ENCODE measurements at regions of chr7 and their contacts with region 1.

Region 1: DNA sequence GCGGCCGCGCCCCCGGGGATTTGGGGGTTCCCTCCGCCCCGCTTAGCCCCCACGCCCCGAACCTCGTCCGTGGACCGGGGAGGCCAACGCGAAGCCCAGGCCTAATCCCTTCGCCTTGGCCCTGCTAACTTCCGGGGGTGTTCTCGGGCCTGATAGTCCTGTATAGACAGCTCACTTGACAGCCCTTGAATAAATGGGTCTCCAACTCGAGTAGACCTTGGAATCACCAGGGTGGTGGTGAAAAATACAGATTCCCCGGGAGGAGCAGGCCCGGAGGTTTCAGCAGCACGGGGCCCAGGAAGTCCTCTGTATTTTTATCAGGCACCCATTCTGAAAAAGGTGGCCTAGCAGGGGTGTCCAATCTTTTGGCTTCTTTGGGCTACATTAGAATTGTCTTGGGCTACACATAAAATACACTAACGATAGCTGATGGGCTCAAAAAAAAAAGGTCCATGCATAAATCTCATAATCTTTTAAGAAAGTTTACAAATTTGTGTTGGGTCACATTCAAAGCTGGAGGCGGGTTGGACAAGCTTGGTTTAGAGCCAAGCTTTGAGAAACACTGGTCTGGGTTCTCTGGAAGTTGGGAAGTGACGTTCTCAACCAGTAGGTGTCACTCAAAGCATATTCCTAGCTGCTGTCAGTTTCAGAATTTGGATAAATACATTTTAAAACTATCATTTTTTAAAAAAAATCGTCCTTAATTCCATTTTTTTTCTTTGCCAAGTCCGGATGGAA is 221.7 kb downstream of the PHTF2 start:
- DNase-seq: peak; percentile 86
- H3K4me3 ChIP-seq: peak overlapping the region; percentile 54
- H3K27ac ChIP-seq: peak overlapping the region; percentile 3
- H3K4me1 ChIP-seq: peaks cover 13% of the 10 kb centered on the region
- H3K27me3 ChIP-seq: no peaks in the 10 kb centered on the region
- CTCF ChIP-seq: peak; percentile 85

Region 2: GRCh38 chr7:77877791-77878190 is 142.5 kb before region 1 on chr7:
- CTCF ChIA-PET with region 1: no interaction called
- POLR2A ChIA-PET with region 1: no interaction called
- intact Hi-C with region 1: no loop called
- DNase-seq: peak; percentile 20
- H3K4me3 ChIP-seq: no peak overlapping the region
- H3K27ac ChIP-seq: no peak overlapping the region
- H3K4me1 ChIP-seq: no peaks in the 10 kb centered on the region
- H3K27me3 ChIP-seq: no peaks in the 10 kb centered on the region
- CTCF ChIP-seq: no peak

Region 3: DNA sequence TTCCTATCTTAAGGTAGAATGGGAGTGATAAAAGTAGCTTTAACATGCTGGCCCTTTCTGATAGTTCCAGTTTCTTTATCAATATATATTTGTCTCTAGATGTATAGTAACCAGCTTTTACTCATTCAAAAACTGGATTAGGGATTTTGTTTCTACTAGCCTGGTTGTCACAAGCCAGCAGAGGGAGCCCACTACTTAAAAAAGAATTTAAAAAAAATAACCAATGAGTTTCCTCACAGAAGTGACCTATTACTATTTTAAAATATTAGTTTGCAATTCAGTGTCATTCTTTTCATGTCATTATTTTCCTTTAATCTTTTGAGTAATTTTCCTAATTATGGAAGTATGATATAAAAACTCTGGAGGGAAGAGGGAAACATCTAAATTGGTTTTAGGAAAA is 79.7 kb before region 1 on chr7:
- CTCF ChIA-PET with region 1: no interaction called
- POLR2A ChIA-PET with region 1: no interaction called
- intact Hi-C with region 1: loop called (anchors 2 kb)
- DNase-seq: peak; percentile 68
- H3K4me3 ChIP-seq: no peak overlapping the region
- H3K27ac ChIP-seq: no peak overlapping the region
- H3K4me1 ChIP-seq: no peaks in the 10 kb centered on the region
- H3K27me3 ChIP-seq: no peaks in the 10 kb centered on the region
- CTCF ChIP-seq: peak; percentile 78

Region 4: DNA sequence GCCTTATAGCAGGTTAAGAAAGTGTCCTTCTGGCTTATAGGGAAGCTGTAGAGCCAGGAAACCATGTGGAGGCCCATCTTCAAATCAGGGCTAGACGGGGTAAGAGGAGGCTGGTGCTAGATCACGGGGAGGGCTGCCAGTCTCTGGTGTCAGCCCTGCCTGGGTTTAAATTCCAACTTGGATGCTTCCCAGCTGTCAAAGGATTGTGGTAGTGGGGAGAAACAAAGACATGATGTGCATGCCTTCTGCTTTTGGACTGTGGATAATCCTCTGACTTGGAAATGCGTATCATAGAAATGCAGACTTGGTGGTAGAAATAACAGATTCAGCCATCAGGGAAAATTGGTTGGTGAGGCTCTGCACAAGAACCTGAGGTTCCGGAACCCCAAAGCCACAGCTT is 103.9 kb after region 1 on chr7:
- CTCF ChIA-PET with region 1: no interaction called
- POLR2A ChIA-PET with region 1: no interaction called
- intact Hi-C with region 1: no loop called
- DNase-seq: no peak
- H3K4me3 ChIP-seq: no peak overlapping the region
- H3K27ac ChIP-seq: no peak overlapping the region
- H3K4me1 ChIP-seq: no peaks in the 10 kb centered on the region
- H3K27me3 ChIP-seq: peaks cover 20% of the 10 kb centered on the region
- CTCF ChIP-seq: no peak

Region 5: DNA sequence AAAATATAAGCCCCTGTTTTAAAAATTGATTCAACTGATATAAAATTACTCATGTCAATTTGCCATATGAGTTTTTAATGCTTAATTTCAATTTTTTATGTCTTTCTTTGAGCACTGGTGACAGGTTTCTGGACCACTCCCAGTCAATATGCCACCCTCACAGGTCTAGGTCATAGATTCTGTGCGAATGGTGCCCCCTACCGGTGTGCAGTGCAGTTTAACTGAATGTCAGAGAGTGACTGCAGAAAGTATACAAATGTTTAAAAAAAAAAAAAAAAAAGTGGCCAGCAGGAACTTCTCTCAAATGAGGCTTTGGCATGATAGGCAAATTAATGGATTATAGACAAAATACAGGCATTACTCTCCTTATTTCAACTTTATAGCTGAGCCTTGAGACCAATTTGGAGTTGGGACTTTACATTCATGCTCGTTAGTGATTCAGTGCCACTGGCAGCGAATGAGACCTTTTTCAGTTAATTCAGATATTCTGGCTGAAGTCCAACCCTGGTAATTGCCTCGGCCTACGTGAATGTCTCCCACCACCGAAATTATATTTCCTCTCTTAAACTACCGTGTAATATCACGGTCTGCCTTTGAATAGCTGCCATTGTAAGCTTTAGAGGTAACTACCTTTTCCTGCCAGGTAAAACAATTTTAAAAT is 205.9 kb after region 1 on chr7:
- CTCF ChIA-PET with region 1: no interaction called
- POLR2A ChIA-PET with region 1: no interaction called
- intact Hi-C with region 1: loop called (anchors 2 kb)
- DNase-seq: peak; percentile 76
- H3K4me3 ChIP-seq: no peak overlapping the region
- H3K27ac ChIP-seq: no peak overlapping the region
- H3K4me1 ChIP-seq: peaks cover 5% of the 10 kb centered on the region
- H3K27me3 ChIP-seq: peaks cover 5% of the 10 kb centered on the region
- CTCF ChIP-seq: peak; percentile 83

Region 6: GRCh38 chr7:78412217-78412858 is 392.0 kb after region 1 on chr7:
- CTCF ChIA-PET with region 1: no interaction called
- POLR2A ChIA-PET with region 1: no interaction called
- intact Hi-C with region 1: loop called (anchors 10 kb)
- DNase-seq: no peak
- H3K4me3 ChIP-seq: no peak overlapping the region
- H3K27ac ChIP-seq: no peak overlapping the region
- H3K4me1 ChIP-seq: no peaks in the 10 kb centered on the region
- H3K27me3 ChIP-seq: peaks cover 28% of the 10 kb centered on the region
- CTCF ChIP-seq: no peak

Measured in A673 (cell line).